Posterior vena cava (tissue), 2 donors: ENCODE measurements at regions of chr3 and their contacts with region 1.

Region 1: DNA sequence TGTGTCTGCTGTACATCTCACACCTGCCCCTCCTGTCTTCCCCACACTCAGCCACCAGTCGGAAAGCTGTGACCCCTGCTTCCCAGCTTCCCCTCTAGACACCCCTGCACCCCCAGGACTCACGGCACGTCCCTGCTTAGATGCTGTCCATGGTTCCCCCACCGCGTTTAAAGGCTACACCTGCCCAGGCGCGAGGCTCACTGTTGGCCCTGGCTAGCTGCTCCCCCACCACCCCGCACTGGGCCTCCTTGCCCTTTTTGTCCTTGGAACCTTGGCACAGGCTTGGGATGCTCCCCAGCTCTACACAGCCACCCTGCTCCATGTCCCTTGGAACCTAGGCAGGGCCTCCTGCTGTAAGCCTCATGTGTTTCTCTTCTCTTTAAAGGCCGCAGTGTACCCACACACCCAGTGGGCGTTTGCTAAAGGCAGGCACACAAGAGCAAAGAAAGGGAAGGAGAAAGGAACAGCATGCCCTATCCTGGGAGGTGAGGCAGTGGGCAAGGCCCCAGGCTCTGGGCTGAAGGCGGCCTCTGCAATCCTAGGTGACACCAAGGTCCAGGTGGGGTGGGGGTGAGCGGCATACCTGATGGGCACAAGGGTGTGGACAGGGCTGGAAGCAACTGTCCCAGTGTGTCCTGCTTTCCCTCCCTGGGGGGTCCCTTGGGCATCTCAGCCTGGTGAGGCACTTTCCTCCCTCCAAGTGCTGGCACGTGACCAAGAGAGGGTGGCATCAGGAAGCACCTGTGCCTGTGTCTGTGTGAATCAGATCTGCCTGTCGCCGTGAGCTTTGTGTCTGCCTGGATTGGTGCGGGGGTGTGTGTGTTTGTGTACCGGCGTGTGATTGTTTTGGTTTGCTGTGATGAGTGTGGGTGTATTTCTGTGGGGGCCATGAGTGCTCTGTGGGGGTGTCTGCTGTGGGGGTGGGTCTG is 54.4 kb downstream of the TPRA1 start:
- DNase-seq: peak; percentile 71

Region 2: DNA sequence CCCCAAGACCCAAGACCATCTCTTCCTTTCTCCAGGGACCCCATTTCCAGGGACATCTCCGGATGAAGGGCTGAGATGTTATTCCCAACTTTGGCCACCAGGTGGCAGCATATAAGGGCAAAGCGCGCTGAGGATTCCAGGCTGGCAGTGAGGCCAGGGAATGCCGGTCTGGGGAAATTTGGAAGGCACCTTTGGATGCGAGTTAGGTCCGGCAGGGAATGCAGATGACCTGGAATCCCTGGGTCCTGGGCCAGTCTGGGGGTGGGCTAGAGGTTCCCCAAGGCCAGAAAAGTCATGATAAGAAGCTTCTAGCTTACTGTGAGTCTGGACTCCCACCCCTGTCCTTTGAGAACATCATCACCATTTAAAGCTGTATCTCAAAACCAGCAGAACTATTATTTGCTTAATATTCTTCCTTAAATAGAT is 1013.8 kb before region 1 on chr3:
- intact Hi-C with region 1: loop called in 1 of 2 experiments (anchors 10 kb)
- DNase-seq: peak; percentile 85

Region 3: GRCh38 chr3:126613479-126614188 is 922.5 kb before region 1 on chr3:
- intact Hi-C with region 1: no loop called
- DNase-seq: no peak